GM12878 (cell line): ENCODE measurements at regions of chr6 and their contacts with region 1.

Region 1: DNA sequence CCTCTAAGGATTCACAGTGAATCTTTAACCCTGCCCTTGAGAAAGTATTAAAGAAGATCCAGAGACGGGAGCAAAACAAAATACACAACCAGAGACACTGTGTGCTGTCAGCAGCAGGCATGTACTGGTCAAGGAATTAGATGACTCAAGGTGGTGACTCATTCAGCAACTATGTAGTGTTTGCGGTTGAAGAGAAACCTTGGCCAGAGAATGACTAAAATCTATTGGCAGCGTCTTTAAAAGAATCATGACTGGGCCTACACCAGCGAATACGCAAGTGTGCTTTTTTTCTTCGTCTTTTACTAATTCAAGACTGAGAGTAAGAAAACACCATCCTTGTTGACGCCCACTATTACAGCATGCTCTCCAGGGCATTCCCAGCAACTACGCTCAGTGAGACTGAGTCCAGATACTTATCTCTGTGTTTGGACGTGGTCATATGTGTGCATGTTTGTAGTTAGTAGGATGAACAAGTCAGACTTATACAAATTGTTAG is 72.4 kb upstream of the BACH2 start:
- DNase-seq: peak; percentile 90
- ATAC-seq: peak; percentile 99
- H3K4me3 ChIP-seq: no peak overlapping the region
- H3K27ac ChIP-seq: no peak overlapping the region
- H3K4me1 ChIP-seq: peaks cover 13% of the 10 kb centered on the region
- H3K27me3 ChIP-seq: peaks cover 0 to 3% of the 10 kb centered on the region in 2 experiments; a peak in 2 of 4 replicates
- CTCF ChIP-seq: no peak
- EP300 ChIP-seq: peak; percentile 87 to 94
- POLR2A ChIP-seq: no peak
- RAD21 ChIP-seq: no peak

Region 2: GRCh38 chr6:90098001-90098531 is 271.0 kb before region 1 on chr6:
- CTCF ChIA-PET with region 1: no interaction called
- POLR2A ChIA-PET with region 1: no interaction called
- RAD21 ChIA-PET with region 1: no interaction called
- SMC1A ChIA-PET with region 1: no interaction called
- in situ Hi-C with region 1: no loop called
- intact Hi-C with region 1: loop called (anchors 5 kb)
- DNase-seq: no peak
- ATAC-seq: no peak
- H3K4me3 ChIP-seq: no peak overlapping the region
- H3K27ac ChIP-seq: no peak overlapping the region
- H3K4me1 ChIP-seq: peaks cover 2% of the 10 kb centered on the region
- H3K27me3 ChIP-seq: peaks cover 0 to 2% of the 10 kb centered on the region in 2 experiments; a peak in 2 of 4 replicates
- CTCF ChIP-seq: no peak
- EP300 ChIP-seq: no peak
- POLR2A ChIP-seq: no peak
- RAD21 ChIP-seq: no peak